ENCODE measurements at regions of chr11 and their contacts with region 1.

Region 1: GRCh38 chr11:304915-305843 is 2.4 kb upstream of the IFITM2 start:
- DNase-seq: peak; percentile 63
- ATAC-seq: no peak
- H3K4me3 Mint-ChIP-seq: no peak overlapping the region
- H3K27ac Mint-ChIP-seq: peak overlapping the region; percentile 28
- H3K4me1 Mint-ChIP-seq: peaks cover 44% of the 10 kb centered on the region
- H3K27me3 Mint-ChIP-seq: peaks cover 7% of the 10 kb centered on the region

Region 2: GRCh38 chr11:257766-258493 is 47.2 kb before region 1 on chr11:
- POLR2A ChIA-PET with region 1: no interaction called
- DNase-seq: no peak
- ATAC-seq: no peak
- H3K4me3 Mint-ChIP-seq: no peak overlapping the region
- H3K27ac Mint-ChIP-seq: peak overlapping the region; percentile 24
- H3K4me1 Mint-ChIP-seq: peaks cover 2% of the 10 kb centered on the region
- H3K27me3 Mint-ChIP-seq: peaks cover 3% of the 10 kb centered on the region

Region 3: GRCh38 chr11:279966-280582 is 25.1 kb before region 1 on chr11:
- POLR2A ChIA-PET with region 1: interaction called, 61 read pairs
- DNase-seq: peak; percentile 69
- ATAC-seq: peak; percentile 31
- H3K4me3 Mint-ChIP-seq: peak overlapping the region; percentile 89
- H3K27ac Mint-ChIP-seq: peak overlapping the region; percentile 95
- H3K4me1 Mint-ChIP-seq: peaks cover 32% of the 10 kb centered on the region
- H3K27me3 Mint-ChIP-seq: no peaks in the 10 kb centered on the region

Region 4: GRCh38 chr11:288328-289144 is 16.6 kb before region 1 on chr11 and contains the start of gene PGGHG:
- POLR2A ChIA-PET with region 1: interaction called, 71 read pairs
- DNase-seq: peak; percentile 88
- ATAC-seq: peak; percentile 38
- H3K4me3 Mint-ChIP-seq: peak within 1 kb of the TSS; percentile 93
- H3K27ac Mint-ChIP-seq: peak within 1 kb of the TSS; percentile 98
- H3K4me1 Mint-ChIP-seq: peaks cover 34% of the 10 kb centered on the region
- H3K27me3 Mint-ChIP-seq: no peaks in the 10 kb centered on the region
- total RNA-seq, gene PGGHG: 641 to 664 TPM

Region 5: DNA sequence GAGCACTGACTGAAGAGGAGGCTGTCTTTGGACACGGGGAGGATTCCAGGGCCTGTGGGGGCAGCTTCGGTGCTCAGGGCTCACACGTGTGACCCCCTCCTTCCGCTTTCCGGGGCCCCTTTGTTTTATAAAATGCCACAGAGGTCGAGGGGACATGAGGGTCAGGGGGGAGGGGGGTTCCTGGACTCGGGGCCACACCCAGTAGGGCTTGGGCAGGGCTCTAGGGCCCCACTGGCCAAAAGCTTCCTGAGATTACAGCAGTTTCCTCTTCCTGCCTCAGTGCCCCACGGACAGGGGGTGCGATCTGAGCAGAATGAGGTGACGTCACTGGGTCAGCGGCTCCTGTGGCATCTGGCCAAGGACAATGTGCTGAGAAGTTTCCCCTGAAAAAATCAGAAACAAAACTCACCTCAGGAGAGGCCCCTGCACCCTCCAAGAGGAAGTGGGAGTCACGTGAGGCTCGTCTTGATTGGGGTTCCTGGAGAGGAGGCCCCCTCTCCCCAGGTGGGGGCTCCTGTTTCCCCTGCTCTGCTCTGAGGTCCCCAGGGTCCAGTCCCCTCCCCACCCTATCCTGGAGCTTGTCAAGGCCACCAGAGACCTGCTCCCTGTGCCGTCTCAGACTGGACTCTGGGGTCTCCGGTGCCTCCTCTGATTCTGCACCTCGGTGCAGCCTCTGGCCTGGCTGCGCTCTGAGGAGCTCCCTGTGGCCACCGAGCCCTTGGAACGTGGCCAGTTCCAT is 21.8 kb after region 1 on chr11:
- POLR2A ChIA-PET with region 1: interaction called, 12 read pairs
- DNase-seq: peak; percentile 77
- ATAC-seq: peak; percentile 62
- H3K4me3 Mint-ChIP-seq: peak overlapping the region; percentile 86
- H3K27ac Mint-ChIP-seq: peak overlapping the region; percentile 100
- H3K4me1 Mint-ChIP-seq: peaks cover 68% of the 10 kb centered on the region
- H3K27me3 Mint-ChIP-seq: no peaks in the 10 kb centered on the region

Region 6: DNA sequence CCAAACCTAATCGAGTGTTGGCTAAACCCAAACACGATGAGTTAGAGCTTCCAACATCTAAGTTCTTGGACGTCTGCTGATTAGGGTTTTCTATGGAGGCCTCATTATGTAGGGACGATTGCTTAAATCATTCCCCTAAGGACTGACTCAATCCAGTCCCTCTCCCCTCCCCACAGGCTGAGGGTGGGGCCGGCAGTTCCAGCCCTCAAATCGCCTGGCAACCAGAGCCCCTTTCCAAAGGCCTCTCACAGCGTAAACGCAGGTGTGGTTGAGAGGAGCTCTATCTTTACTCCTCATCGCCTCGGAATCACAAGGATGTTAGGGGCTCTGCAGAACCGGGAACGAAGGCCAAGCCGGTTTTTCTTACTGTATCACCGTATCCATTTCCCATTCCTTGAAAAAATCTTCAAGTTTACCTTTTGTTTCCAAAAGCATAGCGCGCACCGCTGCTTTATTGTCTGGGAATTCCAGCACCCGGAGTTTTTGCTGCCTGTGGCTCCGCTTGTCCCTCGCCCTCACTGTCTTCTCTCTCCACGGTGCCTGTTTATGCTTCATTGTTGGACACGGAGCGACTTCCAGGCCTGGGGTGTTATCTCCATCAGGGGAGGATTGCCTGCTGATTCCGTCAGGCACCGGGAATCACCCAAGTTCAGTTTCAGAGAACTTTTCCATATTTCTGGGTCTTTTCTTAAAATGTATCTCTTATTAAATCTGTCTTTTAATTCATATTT is 29.2 kb after region 1 on chr11:
- POLR2A ChIA-PET with region 1: interaction called, 11 read pairs
- DNase-seq: no peak
- ATAC-seq: no peak
- H3K4me3 Mint-ChIP-seq: no peak overlapping the region
- H3K27ac Mint-ChIP-seq: no peak overlapping the region
- H3K4me1 Mint-ChIP-seq: peaks cover 54% of the 10 kb centered on the region
- H3K27me3 Mint-ChIP-seq: no peaks in the 10 kb centered on the region

Region 7: DNA sequence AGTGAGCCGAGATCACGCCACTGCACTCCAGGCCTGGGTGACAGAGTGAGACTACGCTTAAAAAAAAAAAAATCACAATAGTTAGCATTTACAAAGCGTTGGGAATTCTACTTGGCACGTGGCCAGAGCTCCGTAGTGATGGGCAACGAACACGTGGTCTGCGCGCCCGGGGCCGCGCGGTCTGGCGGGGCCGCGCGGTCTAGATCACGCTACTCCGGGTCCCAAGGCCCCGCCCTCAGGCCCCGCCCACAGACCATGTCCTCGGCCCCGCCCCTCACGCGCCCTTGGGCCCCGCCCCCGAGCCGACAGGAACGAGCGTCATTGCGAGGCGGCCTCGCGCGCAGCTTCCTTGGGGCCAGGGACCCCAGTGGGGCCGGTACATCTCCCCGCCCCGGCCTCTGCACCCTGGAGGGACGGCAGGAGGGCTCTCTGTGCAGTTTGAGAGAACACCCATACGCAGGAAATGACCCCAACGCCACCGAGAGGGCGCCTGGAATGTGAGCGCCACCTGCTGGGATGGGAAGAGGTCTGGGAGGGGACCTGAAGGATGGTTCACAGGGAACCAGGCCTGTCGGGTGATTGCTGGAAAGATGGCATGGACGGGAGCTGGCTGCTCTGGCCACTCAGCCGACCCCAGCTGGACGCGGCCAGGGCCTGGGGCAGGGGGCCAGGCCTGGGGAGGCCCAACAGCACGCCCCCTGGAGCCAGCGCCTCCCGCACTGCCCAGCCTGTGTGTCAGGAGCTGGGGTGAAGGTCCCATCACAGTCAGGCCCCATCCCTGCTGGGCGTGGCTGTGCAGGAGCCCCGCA is 142.9 kb after region 1 on chr11:
- POLR2A ChIA-PET with region 1: interaction called, 14 read pairs
- DNase-seq: peak; percentile 99
- ATAC-seq: peak; percentile 81
- H3K4me3 Mint-ChIP-seq: peak overlapping the region; percentile 94
- H3K27ac Mint-ChIP-seq: peak overlapping the region; percentile 97
- H3K4me1 Mint-ChIP-seq: peaks cover 15% of the 10 kb centered on the region
- H3K27me3 Mint-ChIP-seq: peaks cover 3% of the 10 kb centered on the region